Activated CD4-positive, alpha-beta T cell treated with anti-CD3 and anti-CD28 coated beads for 36 hours (primary cell): ENCODE measurements at regions of chr11 and their contacts with region 1.

Region 1: GRCh38 chr11:62324738-62325556 is 12.3 kb upstream of the ASRGL1 start:
- DNase-seq: peak; percentile 87
- ATAC-seq: peak; percentile 98
- H3K4me3 Mint-ChIP-seq: no peak overlapping the region
- H3K27ac Mint-ChIP-seq: no peak overlapping the region
- H3K4me1 Mint-ChIP-seq: peaks cover 3% of the 10 kb centered on the region
- H3K27me3 Mint-ChIP-seq: peaks cover 17% of the 10 kb centered on the region

Region 2: DNA sequence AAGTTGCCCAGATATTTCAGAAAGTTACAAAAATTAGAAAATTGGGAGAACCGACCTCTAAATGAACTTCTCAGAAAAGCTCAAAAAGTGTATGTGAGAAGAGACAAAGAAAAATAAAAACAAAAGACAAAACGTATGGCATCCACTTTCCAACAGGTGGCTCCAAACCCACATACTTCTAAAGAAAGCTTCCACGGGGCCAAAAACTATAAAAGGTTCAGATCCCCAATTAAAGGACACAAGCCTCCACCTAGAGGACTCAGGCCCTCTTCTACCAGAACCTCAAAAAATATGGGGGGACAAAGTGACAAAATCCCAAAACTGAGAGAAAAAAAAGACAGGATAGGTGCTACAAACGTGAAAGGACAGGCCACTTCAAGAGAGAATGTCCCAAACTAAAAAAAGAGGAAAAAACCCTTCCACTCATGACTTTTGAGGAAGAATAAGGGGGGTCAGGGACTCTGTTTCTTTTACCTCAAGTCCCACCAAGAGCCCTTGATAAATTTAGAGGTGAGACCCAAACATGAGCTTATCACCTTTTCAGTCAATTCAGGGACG is 107.7 kb before region 1 on chr11:
- CTCF ChIA-PET with region 1: interaction called, 4 read pairs
- POLR2A ChIA-PET with region 1: no interaction called
- intact Hi-C with region 1: loop called in 1 of 2 experiments (anchors 1 kb)
- DNase-seq: peak; percentile 8
- ATAC-seq: no peak
- H3K4me3 Mint-ChIP-seq: no peak overlapping the region
- H3K27ac Mint-ChIP-seq: no peak overlapping the region
- H3K4me1 Mint-ChIP-seq: no peaks in the 10 kb centered on the region
- H3K27me3 Mint-ChIP-seq: peaks cover 11% of the 10 kb centered on the region

Region 3: GRCh38 chr11:62233730-62234129 is 91.2 kb before region 1 on chr11:
- CTCF ChIA-PET with region 1: no interaction called
- POLR2A ChIA-PET with region 1: no interaction called
- intact Hi-C with region 1: loop called in 1 of 2 experiments (anchors 1 kb)
- DNase-seq: no peak
- ATAC-seq: peak; percentile 23
- H3K4me3 Mint-ChIP-seq: no peak overlapping the region
- H3K27ac Mint-ChIP-seq: no peak overlapping the region
- H3K4me1 Mint-ChIP-seq: no peaks in the 10 kb centered on the region
- H3K27me3 Mint-ChIP-seq: peaks cover 29% of the 10 kb centered on the region

Region 4: GRCh38 chr11:62309991-62310390 is 15.0 kb before region 1 on chr11:
- CTCF ChIA-PET with region 1: interaction called, 31 read pairs
- POLR2A ChIA-PET with region 1: no interaction called
- intact Hi-C with region 1: loop called in 1 of 2 experiments (anchors 1 kb)
- DNase-seq: no peak
- ATAC-seq: no peak
- H3K4me3 Mint-ChIP-seq: no peak overlapping the region
- H3K27ac Mint-ChIP-seq: no peak overlapping the region
- H3K4me1 Mint-ChIP-seq: peaks cover 10% of the 10 kb centered on the region
- H3K27me3 Mint-ChIP-seq: peaks cover 18% of the 10 kb centered on the region